ENCODE measurements at regions of chr11 and their contacts with region 1.

Region 1: DNA sequence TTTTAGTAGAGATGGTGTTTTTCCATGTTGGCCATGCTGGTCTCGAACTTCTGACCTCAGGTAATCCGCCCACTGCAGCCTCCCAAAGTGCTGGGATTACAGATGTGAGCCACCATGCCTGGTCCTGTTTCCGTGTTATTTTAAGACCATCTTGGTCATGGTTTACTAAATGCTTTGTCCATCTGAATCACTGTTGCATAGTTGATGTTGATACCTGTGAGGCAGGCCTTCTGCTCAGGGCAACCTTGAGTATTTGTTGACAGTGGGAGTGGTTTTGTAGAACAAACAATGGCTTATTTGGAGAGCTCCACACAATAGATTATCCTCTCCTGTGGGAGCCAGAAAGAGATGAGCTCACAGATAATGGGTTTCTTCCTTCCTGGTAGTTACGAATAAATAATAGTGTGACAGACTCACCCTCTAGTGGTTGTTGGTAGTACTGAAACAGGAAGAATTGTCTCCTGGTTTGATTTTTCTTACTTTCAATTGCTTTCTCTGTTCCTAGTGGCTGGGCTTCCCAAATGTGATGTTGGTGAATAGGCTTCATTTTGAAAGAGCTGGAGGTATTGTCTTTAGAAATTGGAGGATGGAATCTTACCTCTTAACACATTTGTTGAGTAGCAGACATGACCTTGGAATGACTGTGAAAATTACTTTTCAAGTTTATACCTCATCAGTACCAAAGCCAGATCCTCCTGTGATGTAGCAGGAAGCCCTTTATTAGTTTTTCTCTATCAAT is 39.0 kb downstream of the CTNND1 start:
- H3K4me3 ChIP-seq: no peak overlapping the region
- H3K27ac ChIP-seq: no peak overlapping the region
- H3K4me1 ChIP-seq: no peaks in the 10 kb centered on the region
- CTCF ChIP-seq: peak; percentile 46; the same call in 1 of the 2 replicates

Region 2: DNA sequence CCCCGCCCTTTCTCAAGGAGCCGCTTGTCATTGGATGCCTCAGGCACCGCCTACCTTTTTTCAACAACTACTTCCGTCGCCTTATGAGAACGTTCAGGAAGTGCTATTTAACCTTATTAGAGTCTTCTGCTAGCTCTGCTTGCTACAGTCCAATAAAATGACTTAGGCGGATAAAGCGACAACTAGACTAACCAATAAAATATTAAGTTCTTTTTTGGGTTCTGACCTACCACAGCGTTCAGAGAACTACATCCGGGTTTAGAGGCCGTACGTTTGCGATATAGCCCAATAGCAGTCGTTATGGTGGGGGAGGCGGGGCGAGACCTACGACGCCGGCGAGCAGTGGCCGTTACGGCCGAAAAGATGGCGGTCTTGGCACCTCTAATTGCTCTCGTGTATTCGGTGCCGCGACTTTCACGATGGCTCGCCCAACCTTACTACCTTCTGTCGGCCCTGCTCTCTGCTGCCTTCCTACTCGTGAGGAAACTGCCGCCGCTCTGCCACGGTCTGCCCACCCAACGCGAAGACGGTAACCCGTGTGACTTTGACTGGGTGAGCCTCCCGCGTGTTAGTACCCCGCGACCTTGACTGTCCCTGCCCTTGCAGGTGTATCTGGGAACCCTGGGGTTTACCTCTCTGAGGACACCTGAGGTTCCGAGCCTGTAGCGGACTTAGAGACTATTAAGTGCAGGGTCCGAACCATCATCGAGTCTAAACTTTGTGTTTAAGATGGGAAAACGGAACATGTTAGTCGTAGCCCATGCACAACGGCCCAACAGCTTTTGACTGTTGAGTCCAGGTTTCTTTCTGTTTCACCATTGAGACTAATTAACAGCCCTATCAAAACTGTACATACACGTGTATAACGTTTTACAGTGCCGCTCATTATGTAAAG is 88.1 kb before region 1 on chr11 and contains the start of gene TMX2:
- CTCF ChIA-PET with region 1: interaction called, 12 read pairs
- POLR2A ChIA-PET with region 1: interaction called, 7 read pairs
- H3K4me3 ChIP-seq: peak within 1 kb of the TSS; percentile 97
- H3K27ac ChIP-seq: peak within 1 kb of the TSS; percentile 66
- H3K4me1 ChIP-seq: no peaks in the 10 kb centered on the region
- CTCF ChIP-seq: no peak

Region 3: DNA sequence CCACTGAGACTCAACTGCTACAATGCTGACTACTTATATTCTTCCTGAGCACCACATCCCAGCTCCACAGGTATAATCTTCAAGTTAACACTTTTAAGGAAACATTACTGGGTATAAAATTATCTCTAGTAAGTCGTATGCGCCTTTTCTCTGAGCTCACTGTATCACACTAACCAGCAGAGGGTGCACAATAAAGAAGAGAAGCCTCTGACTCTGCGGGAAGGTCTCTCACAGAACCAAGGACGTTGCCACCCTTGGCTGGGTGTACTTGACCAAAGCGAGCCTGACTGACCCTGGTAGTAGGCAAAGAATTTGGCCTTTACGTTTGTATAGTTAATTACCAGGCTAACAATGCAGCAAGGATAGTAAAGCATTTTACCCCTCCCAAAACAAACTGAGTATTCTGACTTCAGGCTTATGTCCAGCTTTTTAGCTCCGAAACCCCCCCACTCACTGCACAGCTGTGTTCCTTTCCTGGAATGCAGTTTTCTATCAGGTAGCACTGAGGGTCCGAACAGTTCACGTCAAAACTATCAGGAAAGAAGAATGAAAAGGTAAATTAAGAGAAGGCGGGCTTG is 48.8 kb before region 1 on chr11 and contains the start of gene BTBD18:
- CTCF ChIA-PET with region 1: interaction called, 151 read pairs
- POLR2A ChIA-PET with region 1: interaction called, 7 read pairs
- H3K4me3 ChIP-seq: no peak within 1 kb of the TSS
- H3K27ac ChIP-seq: no peak within 1 kb of the TSS
- H3K4me1 ChIP-seq: no peaks in the 10 kb centered on the region
- CTCF ChIP-seq: no peak

Region 4: GRCh38 chr11:57778318-57779037 is 22.1 kb before region 1 on chr11:
- CTCF ChIA-PET with region 1: interaction called, 14 read pairs
- POLR2A ChIA-PET with region 1: interaction called, 12 read pairs
- H3K4me3 ChIP-seq: peak overlapping the region; percentile 18
- H3K27ac ChIP-seq: peak overlapping the region; percentile 50
- H3K4me1 ChIP-seq: peaks cover 12% of the 10 kb centered on the region; the same call in 1 of the 2 replicates
- CTCF ChIP-seq: no peak

Region 5: DNA sequence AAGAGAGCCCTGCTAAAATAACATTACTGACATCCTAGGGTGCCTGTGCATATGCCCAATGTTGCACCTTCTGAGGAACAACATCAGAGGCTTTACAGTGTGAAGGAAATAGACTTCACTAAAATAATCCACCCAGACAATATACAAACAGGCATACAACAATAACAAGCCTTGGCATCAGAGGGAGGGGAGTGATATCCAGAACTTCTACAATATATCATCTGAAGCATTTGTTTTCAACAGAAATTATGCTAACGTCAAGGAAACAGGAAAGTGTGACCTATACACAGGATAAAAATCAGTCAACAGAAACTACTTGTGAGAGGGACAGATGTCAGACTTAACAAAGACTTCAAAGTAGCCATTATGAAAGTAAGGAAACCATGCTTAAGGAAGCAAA is 42.3 kb after region 1 on chr11:
- CTCF ChIA-PET with region 1: no interaction called
- POLR2A ChIA-PET with region 1: no interaction called
- H3K4me3 ChIP-seq: no peak overlapping the region
- H3K27ac ChIP-seq: no peak overlapping the region
- H3K4me1 ChIP-seq: no peaks in the 10 kb centered on the region
- CTCF ChIP-seq: no peak